Gastrocnemius medialis (tissue), 4 donors: ENCODE measurements at regions of chr5 and their contacts with region 1.

Region 1: DNA sequence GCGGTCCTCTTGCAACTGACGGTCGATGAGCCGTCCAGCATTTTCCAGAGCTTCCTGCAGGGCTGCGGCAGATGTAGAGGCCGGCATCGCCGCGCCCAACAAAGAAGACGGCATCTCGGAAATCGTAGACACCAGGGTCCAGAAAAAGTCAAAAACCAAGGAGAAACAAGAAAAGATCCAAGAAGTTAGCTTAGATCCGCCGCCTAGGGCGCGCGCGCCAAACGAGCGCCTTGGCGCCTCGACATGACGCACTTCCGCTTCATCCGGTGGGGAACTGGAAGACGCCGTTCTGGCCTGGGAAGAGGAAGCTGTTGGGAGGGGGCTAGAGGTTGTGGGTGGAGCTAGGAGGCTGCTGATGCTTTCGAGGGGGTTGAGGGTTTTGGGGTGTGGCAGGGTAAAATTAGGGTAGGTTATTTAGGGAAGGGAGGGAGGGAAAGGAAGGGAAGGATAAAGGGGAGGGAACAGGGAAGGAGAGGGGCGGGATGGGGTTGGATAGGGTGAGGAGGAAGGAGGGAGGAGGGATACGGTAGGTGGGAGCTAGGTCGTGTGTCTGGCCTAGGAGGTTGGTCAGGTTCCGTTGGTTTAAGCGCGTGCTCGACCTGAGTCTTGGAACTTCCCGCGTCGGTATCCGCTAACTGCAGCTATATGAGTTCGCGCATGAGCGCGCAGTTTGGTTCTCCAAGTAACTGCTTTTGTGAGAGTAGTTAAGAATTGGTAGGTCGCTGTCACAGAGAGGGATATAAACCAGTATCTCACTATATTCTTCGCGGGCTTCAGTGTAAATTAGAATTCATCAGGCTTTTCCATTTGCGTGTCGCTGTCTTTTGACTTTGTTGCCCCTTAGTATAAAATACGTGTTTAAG is at the start of gene NUP155:
- DNase-seq: peak; percentile 85
- ATAC-seq: peak; percentile 98
- H3K4me3 ChIP-seq: peak within 1 kb of the TSS; percentile 80 to 99 (median 92)
- H3K27ac ChIP-seq: peak within 1 kb of the TSS; percentile 75 to 86 (median 83)
- H3K4me1 ChIP-seq: peaks cover 21 to 25% of the 10 kb centered on the region in 2 donors
- H3K27me3 ChIP-seq: no peaks in the 10 kb centered on the region
- CTCF ChIP-seq: peak in 2 of 5 experiments; percentile 5 to 12
- POLR2A ChIP-seq: peak; percentile 33 to 58
- total RNA-seq, gene NUP155: 10.3 to 11.4 (median 10.5) TPM

Region 2: DNA sequence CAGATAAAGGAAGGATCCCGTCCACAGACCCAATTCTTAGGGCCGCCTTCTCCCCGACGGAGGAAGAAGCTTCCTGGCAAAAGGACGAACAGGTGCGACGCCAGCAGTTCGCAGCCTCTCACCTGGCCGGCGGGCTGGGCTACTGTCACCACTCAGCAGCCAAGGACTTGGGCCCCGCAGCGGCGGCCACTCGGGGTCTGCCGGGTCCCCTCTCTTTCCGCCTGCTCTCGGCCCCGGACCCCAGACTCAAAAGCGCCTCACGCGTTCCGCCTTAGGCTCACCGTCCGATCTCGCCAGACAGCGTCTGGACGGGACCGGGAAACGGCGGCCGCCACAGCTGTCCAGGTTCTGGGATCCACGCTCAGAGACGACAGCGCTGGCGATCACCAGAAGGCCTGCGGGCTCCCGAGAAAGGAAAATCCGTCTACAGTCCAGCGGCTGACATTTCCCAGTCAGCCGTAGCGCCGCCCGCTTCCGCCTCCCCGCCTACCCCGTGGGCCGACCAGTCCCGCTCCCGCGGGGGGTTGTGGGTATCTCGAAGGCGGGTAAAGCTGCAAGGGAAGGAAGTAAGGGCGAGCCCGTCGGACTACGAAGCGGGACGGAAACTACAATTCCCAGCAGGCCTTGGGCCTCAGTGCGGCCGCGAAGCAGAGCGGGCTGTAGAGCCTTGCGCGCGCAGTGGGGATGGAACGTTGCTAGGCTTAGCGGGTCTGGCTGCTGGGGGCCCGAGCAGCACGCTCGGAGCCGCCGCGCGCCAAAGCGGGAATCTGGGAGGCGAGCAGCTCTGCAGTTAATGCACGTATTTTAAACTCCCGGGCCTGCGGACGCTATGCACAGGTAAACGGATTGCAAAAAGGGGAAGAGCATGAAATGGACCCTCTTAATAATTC is 1219.4 kb before region 1 on chr5 and contains the starts of genes LMBRD2 and SKP2:
- in situ Hi-C with region 1: no loop called
- intact Hi-C with region 1: loop called (anchors 10 kb)
- DNase-seq: peak; percentile 96
- ATAC-seq: peak; percentile 99
- H3K4me3 ChIP-seq: peak within 1 kb of the TSS; percentile 89 to 99 (median 92)
- H3K27ac ChIP-seq: peak within 1 kb of the TSS; percentile 88 to 95 (median 92)
- H3K4me1 ChIP-seq: peaks cover 32 to 41% of the 10 kb centered on the region in 2 donors
- H3K27me3 ChIP-seq: no peaks in the 10 kb centered on the region
- CTCF ChIP-seq: no peak
- POLR2A ChIP-seq: peak; percentile 58 to 74
- total RNA-seq, gene LMBRD2: 12.2 to 29.0 (median 21.3) TPM
- total RNA-seq, gene SKP2: 2.8 to 6.7 (median 3.1) TPM

Region 3: GRCh38 chr5:37412515-37413277 is 41.6 kb after region 1 on chr5:
- in situ Hi-C with region 1: no loop called
- intact Hi-C with region 1: loop called (anchors 1 kb)
- DNase-seq: peak; percentile 13 to 61
- ATAC-seq: peak; percentile 92 to 100
- H3K4me3 ChIP-seq: no peak overlapping the region
- H3K27ac ChIP-seq: no peak overlapping the region
- H3K4me1 ChIP-seq: no peaks in the 10 kb centered on the region
- H3K27me3 ChIP-seq: no peaks in the 10 kb centered on the region
- CTCF ChIP-seq: peak; percentile 63 to 95 (median 70)
- POLR2A ChIP-seq: no peak

Region 4: DNA sequence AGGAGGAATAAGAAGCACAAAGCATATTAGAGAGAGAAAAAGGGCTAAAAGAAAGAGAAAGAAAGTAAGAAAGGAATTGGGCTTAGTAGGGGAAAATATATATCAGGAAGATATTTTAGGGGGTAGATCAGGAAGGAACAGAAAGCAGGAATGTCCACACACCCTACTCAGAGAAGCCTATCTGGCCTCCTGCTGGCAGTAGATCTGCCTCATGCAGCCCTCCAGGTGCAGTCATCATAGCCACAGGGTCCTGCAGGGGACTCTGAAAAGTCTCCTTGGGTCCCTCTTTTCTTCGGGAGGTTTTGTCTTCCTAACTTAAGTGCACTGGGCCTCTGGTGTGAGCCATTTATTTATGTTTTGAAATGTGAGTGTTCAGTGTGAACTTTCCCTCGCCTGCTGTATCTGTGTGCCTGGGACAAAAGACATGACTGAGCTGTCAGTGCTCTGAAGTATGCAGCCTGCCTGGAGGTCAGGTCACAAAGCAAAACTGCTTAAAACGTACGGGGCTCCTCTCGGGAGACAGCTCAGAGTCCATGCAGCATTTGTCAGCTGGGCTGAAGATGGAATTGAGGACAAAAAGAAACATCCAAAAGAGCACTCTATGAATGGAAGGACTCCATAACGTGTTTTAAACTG is 620.3 kb after region 1 on chr5:
- in situ Hi-C with region 1: no loop called
- intact Hi-C with region 1: no loop called
- DNase-seq: no peak
- ATAC-seq: no peak
- H3K4me3 ChIP-seq: no peak overlapping the region
- H3K27ac ChIP-seq: no peak overlapping the region
- H3K4me1 ChIP-seq: no peaks in the 10 kb centered on the region
- H3K27me3 ChIP-seq: no peaks in the 10 kb centered on the region
- CTCF ChIP-seq: no peak
- POLR2A ChIP-seq: no peak